Common myeloid progenitor, CD34-positive (primary cell): ENCODE measurements at regions of chr22 and their contacts with region 1.

Region 1: DNA sequence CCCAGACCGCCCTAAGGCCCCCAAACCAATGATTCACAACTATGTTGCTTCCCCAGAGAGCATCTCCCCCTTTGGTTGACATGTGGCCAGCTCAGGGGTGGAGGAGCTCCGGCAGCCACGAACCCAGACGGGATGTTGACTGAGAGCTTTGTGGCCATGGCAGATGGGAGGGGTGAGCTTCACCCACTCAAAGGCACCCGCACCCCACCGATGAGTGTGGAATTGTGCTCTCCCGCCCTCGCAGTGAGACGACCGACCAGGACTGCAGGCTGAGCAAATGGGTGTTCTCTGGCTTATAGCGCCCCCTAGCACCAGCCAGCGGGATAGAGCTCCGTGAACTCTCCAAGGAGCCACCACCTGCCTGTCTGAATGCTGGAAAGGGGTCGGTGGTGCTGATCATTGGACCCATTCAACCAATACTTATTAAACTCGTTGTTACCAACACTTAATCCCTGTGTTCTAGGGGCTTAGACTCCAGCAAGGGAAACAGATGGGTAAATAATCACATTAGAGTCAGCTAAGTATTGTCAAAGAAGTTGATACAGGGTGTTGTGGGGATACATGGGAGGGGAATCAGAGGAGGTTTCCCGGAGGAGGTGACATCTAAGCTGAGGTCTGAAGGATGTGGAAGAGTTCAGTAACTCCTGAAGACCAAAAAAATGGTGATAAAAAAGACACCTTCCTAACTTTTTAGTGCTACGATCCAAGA is 4.5 kb upstream of the TIMP3 start:
- DNase-seq: peak; percentile 72 to 83 (median 83)
- H3K4me3 ChIP-seq: peak overlapping the region in 3 of 7 experiments; percentile 13 to 52 (median 31)
- H3K27ac ChIP-seq: no peak overlapping the region
- H3K4me1 ChIP-seq: peaks cover 0 to 13% (median 11%) of the 10 kb centered on the region in 4 experiments
- H3K27me3 ChIP-seq: no peaks in the 10 kb centered on the region

Region 2: GRCh38 chr22:32528984-32529982 is 267.7 kb before region 1 on chr22:
- CTCF ChIA-PET with region 1: interaction called, 93 read pairs
- POLR2A ChIA-PET with region 1: interaction called, 3 read pairs
- DNase-seq: peak; percentile 83 to 92 (median 89)
- H3K4me3 ChIP-seq: no peak overlapping the region
- H3K27ac ChIP-seq: no peak overlapping the region
- H3K4me1 ChIP-seq: peaks cover 0 to 4% (median 3%) of the 10 kb centered on the region in 4 experiments
- H3K27me3 ChIP-seq: peaks cover 0 to 3% (median 0%) of the 10 kb centered on the region in 5 experiments

Region 3: GRCh38 chr22:32649515-32650200 is 147.4 kb before region 1 on chr22:
- CTCF ChIA-PET with region 1: interaction called, 220 read pairs
- POLR2A ChIA-PET with region 1: no interaction called
- DNase-seq: peak; percentile 88 to 97 (median 96)
- H3K4me3 ChIP-seq: no peak overlapping the region
- H3K27ac ChIP-seq: no peak overlapping the region
- H3K4me1 ChIP-seq: peaks cover 3 to 42% (median 18%) of the 10 kb centered on the region in 4 experiments
- H3K27me3 ChIP-seq: no peaks in the 10 kb centered on the region

Region 4: DNA sequence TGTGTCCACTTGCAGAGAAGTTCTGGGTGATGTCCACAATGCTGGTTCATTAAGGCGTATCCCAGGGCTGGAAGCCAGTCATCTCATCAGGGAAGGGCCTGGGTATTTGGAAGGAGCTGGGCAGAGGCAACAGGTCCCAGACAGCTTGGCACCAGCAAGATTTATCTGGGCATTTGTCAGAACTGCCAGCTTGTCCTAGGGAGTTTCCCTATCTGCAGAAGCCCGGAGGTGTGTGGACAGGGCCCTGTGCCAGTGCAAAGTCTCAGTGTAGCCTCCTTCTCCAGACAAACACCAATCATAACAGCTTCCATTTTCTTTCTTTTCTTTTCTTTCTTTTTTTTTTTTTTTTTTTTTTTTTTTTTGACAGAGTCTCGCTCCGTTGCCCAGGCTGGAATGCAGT is 120.8 kb before region 1 on chr22:
- CTCF ChIA-PET with region 1: interaction called, 15 read pairs
- POLR2A ChIA-PET with region 1: no interaction called
- DNase-seq: no peak
- H3K4me3 ChIP-seq: no peak overlapping the region
- H3K27ac ChIP-seq: no peak overlapping the region
- H3K4me1 ChIP-seq: peaks cover 0 to 12% (median 9%) of the 10 kb centered on the region in 4 experiments
- H3K27me3 ChIP-seq: no peaks in the 10 kb centered on the region

Region 5: DNA sequence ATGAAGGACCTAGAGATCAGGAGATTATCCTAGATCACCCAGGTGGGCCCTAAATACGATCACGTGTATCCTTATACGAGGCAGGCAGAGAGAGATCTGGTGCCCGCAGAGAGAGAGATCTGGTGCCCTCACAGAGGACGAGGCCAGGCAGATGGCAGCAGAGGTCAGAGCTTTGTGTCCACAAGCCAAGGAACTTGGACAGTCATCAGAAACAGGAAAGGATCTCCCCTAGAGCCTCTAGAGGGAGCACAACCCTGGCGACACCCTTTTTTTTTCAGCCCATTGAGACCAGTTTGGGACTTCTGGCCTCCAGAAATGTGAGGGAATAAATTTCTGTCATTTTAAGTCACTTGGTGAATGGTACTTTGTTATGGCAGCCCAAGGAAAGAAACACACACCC is 21.1 kb before region 1 on chr22:
- CTCF ChIA-PET with region 1: interaction called, 19 read pairs
- POLR2A ChIA-PET with region 1: interaction called, 4 read pairs
- DNase-seq: no peak
- H3K4me3 ChIP-seq: no peak overlapping the region
- H3K27ac ChIP-seq: no peak overlapping the region
- H3K4me1 ChIP-seq: peaks cover 6 to 21% (median 19%) of the 10 kb centered on the region in 4 experiments
- H3K27me3 ChIP-seq: no peaks in the 10 kb centered on the region